ENCODE measurements at regions of chrX and their contacts with region 1.

Region 1: DNA sequence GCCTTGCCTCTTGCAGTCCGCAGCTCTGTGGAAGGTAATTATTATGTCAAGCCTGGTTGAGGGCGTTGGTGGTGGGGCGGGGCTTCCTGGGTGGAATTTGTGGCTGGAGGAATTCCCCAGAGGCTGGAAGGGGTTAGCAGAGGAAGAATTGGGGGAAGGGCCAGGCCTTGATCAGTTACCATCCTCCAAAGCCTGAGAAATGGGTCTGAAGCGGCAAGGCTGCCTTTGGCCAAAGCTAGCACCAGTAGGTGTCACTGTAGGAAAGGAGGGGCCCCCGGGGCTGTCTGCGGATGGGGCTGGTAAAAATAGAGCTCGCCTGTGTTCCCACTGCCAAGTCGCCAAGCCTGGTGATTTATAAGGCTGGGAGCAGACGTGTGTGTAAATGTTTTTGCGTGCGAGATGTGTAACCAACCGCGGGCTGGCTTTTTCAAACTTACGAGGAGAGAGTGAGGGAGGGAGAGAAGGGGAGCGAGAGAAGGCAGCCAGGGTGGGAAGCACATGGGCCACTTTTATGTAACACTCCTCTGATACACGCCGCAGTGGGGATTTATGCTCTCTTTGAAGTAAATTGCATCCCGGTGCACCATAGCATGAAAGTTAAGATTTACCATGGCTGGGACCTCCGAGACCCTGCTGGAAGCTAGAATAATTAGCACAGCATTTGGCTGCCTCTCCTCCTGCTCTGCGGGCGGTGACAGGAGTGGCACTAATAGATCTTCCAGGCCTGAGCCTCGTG is 366.9 kb downstream of the BCOR start:
- DNase-seq: peak; percentile 85
- H3K4me3 Mint-ChIP-seq: peak overlapping the region; percentile 28
- H3K27ac Mint-ChIP-seq: peak overlapping the region; percentile 74
- H3K4me1 Mint-ChIP-seq: peaks cover 19% of the 10 kb centered on the region
- H3K27me3 Mint-ChIP-seq: no peaks in the 10 kb centered on the region

Region 2: DNA sequence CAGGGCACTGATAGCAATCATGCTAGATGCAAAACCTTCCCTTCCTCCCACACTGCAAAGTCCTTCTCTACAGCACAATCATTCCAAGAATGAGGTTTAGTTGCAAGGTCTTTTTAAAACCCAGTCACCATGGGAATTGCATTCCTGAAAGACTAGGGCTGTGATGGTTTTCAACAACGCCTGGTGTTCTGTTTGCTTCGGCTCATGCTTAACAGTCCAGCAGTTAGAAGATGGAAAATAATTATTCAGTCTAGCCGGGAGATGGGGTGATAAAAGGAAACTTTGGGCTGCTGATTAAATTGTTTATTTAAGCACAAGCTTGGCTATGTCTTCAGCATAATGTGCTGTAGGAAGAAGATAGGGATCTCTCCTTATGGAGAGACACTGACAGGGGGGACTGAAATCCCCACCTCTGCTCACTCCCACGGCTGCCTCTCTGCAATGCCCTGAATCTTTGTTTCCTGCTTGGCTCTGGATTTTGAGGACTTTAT is 718.2 kb before region 1 on chrX:
- intact Hi-C with region 1: no loop called
- DNase-seq: no peak
- H3K4me3 Mint-ChIP-seq: no peak overlapping the region
- H3K27ac Mint-ChIP-seq: no peak overlapping the region
- H3K4me1 Mint-ChIP-seq: no peaks in the 10 kb centered on the region
- H3K27me3 Mint-ChIP-seq: no peaks in the 10 kb centered on the region

Region 3: GRCh38 chrX:40006106-40007017 is 275.5 kb after region 1 on chrX:
- intact Hi-C with region 1: loop called (anchors 10 kb)
- DNase-seq: peak; percentile 77
- H3K4me3 Mint-ChIP-seq: peak overlapping the region; percentile 62
- H3K27ac Mint-ChIP-seq: no peak overlapping the region
- H3K4me1 Mint-ChIP-seq: peaks cover 26% of the 10 kb centered on the region
- H3K27me3 Mint-ChIP-seq: peaks cover 29% of the 10 kb centered on the region

Region 4: GRCh38 chrX:40040686-40041461 is 310.0 kb after region 1 on chrX:
- intact Hi-C with region 1: no loop called
- DNase-seq: no peak
- H3K4me3 Mint-ChIP-seq: peak overlapping the region; percentile 50
- H3K27ac Mint-ChIP-seq: peak overlapping the region; percentile 60
- H3K4me1 Mint-ChIP-seq: peaks cover 20% of the 10 kb centered on the region
- H3K27me3 Mint-ChIP-seq: no peaks in the 10 kb centered on the region

Region 5: DNA sequence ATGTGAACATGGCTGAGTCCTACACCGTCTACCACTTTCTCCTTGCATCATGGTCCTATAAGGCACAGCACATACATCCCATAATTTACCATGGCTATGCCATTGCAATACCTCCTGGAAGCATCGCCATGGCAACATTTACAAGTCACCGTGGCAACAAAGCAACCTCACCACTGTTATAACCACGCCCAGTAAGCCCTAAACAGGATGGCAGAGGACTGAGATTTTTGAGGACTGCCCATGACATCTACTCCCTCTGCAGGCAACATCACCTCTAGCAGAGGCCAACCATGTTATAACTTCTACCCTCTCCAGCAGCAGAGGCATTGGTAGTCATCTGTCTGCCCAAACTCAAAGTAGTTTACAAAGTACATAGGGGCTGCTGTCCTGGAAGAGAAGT is 337.2 kb after region 1 on chrX:
- intact Hi-C with region 1: loop called (anchors 10 kb)
- DNase-seq: peak; percentile 78
- H3K4me3 Mint-ChIP-seq: no peak overlapping the region
- H3K27ac Mint-ChIP-seq: peak overlapping the region; percentile 13
- H3K4me1 Mint-ChIP-seq: peaks cover 49% of the 10 kb centered on the region
- H3K27me3 Mint-ChIP-seq: no peaks in the 10 kb centered on the region

Measured in activated CD4-positive, alpha-beta T cell treated with anti-CD3 and anti-CD28 coated beads, Interleukin-2, amount 10 ng/mL, durations not matched to agents 24 days and 14 days (primary cell).